CD14-positive monocyte (primary cell): ENCODE measurements at regions of chr5 and their contacts with region 1.

Region 1: GRCh38 chr5:76547242-76547890 is 75.8 kb downstream of the F2RL2 start:
- DNase-seq: peak; percentile 77 to 90 (median 82)
- H3K4me3 ChIP-seq: peak overlapping the region; percentile 9 to 56 (median 49)
- H3K4me3 Mint-ChIP-seq: peak overlapping the region; percentile 64 to 91
- H3K27ac ChIP-seq: peak overlapping the region; percentile 33 to 81
- H3K27ac Mint-ChIP-seq: peak overlapping the region; percentile 90 to 98 (median 94)
- H3K4me1 ChIP-seq: peaks cover 47 to 49% of the 10 kb centered on the region in 2 donors
- H3K4me1 Mint-ChIP-seq: peaks cover 55% of the 10 kb centered on the region
- H3K27me3 ChIP-seq: no peaks in the 10 kb centered on the region
- H3K27me3 Mint-ChIP-seq: peaks cover 0 to 2% (median 0%) of the 10 kb centered on the region in 3 donors
- CTCF ChIP-seq: no peak

Region 2: DNA sequence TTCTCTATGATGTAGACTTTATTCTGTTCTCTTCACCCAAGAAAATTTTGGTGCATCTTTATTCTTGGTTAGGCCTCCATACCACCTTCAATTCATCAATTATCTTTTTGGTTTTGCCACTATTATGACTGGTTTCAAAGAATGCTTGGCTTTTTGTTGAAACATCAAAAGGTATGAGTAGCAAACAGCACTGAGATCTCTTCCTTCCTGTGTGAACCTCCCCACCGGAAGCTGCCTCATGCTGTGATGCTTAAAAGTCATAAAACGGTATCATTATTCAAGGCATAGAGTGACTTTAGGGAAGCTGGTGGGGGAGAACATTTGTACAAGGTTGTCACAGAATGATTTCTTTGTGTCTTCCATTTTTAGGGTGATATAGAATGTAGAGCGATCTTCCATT is 73.7 kb before region 1 on chr5:
- intact Hi-C with region 1: no loop called
- DNase-seq: peak; percentile 44 to 75 (median 52)
- H3K4me3 ChIP-seq: no peak overlapping the region
- H3K4me3 Mint-ChIP-seq: no peak overlapping the region
- H3K27ac ChIP-seq: peak overlapping the region in 1 of 2 donors; percentile 57
- H3K27ac Mint-ChIP-seq: peak overlapping the region; percentile 19 to 93 (median 66)
- H3K4me1 ChIP-seq: peaks cover 23 to 47% of the 10 kb centered on the region in 2 donors
- H3K4me1 Mint-ChIP-seq: peaks cover 58% of the 10 kb centered on the region
- H3K27me3 ChIP-seq: no peaks in the 10 kb centered on the region
- H3K27me3 Mint-ChIP-seq: peaks cover 0 to 1% (median 0%) of the 10 kb centered on the region in 3 donors
- CTCF ChIP-seq: no peak

Region 3: DNA sequence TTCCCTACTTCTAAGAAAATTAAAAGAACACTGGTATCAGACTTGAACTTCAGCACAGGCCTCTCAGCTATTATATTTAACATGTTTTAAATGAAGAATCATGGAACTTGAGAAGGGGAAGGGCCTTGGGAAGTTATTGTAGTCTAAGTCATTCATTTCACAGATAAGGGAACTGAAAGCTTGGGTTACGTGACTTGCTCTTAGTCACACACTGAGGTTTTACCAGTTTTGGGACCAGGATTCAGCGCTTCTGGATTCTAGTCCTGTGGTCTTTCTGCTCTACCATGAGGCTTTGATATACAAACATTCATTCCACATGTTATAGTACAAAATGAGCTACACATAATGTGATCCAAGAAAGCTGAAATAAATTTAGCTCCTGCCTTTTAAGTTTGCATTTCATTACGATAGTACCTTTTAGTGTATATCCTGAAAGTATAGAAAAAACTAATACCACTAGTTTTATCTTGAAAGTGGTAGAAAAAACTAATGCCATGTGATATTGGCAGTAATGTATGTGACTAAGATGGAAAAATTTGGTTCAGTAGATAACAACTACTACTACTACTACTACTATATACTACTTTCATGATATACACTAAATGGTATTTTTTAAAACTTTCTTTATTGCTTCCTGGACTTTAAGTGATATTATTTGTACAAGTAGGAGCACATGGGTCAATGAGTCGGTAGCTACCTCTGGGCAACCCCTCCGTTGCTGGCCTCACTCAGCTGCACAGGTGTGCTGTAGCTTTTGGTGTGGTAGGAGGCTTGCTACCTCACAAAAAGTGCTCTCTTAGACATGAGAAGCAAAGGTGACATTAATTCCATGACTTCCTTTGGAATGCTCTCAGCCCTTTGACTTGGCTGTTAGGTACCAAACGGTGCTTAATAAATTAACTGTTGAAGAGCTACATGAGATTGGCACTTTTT is 35.1 kb after region 1 on chr5:
- intact Hi-C with region 1: loop called in 1 of 2 experiments (anchors 5 kb)
- DNase-seq: peak; percentile 86 to 96 (median 94)
- H3K4me3 ChIP-seq: peak overlapping the region in 1 of 3 experiments; percentile 7
- H3K4me3 Mint-ChIP-seq: no peak overlapping the region
- H3K27ac ChIP-seq: peak overlapping the region; percentile 17 to 52
- H3K27ac Mint-ChIP-seq: peak overlapping the region; percentile 44 to 84 (median 70)
- H3K4me1 ChIP-seq: peaks cover 18 to 21% of the 10 kb centered on the region in 2 donors
- H3K4me1 Mint-ChIP-seq: peaks cover 29% of the 10 kb centered on the region
- H3K27me3 ChIP-seq: no peaks in the 10 kb centered on the region
- H3K27me3 Mint-ChIP-seq: peaks cover 0 to 1% (median 0%) of the 10 kb centered on the region in 3 donors
- CTCF ChIP-seq: no peak